OCI-LY7 (cell line): ENCODE measurements at regions of chr3 and their contacts with region 1.

Region 1: DNA sequence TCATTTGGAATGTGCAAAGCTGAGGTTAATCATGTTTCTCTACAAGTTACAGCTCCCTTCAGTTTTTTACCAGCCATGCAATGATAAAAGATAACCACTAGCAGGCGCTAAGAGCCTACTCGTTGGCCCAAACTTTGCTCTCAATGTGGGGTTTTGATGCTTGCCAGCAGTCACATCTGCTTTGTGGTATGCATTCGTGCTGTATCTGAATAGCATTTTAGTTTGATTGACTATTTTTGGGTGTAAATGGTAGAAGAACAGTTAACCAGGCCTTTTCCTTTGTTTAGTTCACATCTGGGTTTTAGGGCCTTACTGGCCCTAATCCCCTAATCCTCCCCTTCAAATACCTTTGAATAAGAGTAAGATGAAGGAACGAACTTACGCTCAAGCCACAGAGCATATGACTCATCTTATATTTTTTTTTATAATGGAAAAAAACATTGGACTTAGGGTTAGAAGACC is 4.4 kb upstream of the CLDN11 start:
- DNase-seq: peak; percentile 73
- H3K4me3 ChIP-seq: no peak overlapping the region
- H3K27ac ChIP-seq: no peak overlapping the region
- H3K4me1 ChIP-seq: no peaks in the 10 kb centered on the region
- CTCF ChIP-seq: peak; percentile 99

Region 2: GRCh38 chr3:169863458-169863899 is 550.8 kb before region 1 on chr3:
- CTCF ChIA-PET with region 1: no interaction called
- POLR2A ChIA-PET with region 1: no interaction called
- intact Hi-C with region 1: loop called (anchors 5 kb)
- DNase-seq: peak; percentile 85
- H3K4me3 ChIP-seq: no peak overlapping the region
- H3K27ac ChIP-seq: no peak overlapping the region
- H3K4me1 ChIP-seq: peaks cover 33% of the 10 kb centered on the region
- CTCF ChIP-seq: peak; percentile 99

Region 3: GRCh38 chr3:170598091-170598502 is 183.9 kb after region 1 on chr3:
- CTCF ChIA-PET with region 1: no interaction called
- POLR2A ChIA-PET with region 1: no interaction called
- intact Hi-C with region 1: no loop called
- DNase-seq: no peak
- H3K4me3 ChIP-seq: no peak overlapping the region
- H3K27ac ChIP-seq: no peak overlapping the region
- H3K4me1 ChIP-seq: no peaks in the 10 kb centered on the region
- CTCF ChIP-seq: no peak

Region 4: DNA sequence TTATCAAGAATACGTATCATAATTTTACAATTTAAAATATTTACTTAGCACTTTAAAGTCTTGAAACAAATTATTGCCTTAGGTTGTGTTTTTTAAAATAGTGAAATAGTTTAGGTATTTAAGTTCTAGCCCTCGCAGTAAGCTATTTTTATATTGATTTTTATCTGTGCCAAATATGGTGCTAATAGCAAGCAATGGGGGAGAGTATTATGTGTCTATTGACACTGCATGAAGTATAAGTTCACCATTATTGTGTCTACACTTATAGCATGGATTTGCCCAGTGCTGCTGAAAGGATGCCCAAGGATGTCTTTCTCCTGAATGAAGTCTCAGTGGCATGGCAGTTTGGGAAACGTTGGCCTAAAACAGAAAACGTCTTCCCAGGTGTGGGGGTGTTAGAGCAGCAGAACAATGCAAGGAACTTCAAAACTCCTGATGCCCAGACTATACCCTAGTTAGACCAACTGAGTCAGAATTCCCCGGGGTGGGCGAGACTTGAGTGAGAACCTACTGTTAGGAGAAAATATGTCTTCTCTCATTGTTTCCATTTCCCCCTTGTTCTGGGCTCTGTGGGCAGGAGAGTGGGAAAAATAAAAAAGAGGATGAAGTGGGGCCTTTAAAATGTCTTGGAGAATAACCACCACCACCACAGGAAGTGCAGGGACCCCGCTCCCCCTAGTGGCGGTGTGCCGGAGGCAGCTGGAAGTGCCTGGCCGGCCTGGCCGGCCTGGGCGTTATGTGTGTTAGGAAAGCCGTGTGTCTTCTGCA is 275.8 kb after region 1 on chr3:
- CTCF ChIA-PET with region 1: interaction called, 4 read pairs
- POLR2A ChIA-PET with region 1: no interaction called
- intact Hi-C with region 1: loop called (anchors 1 kb)
- DNase-seq: peak; percentile 52
- H3K4me3 ChIP-seq: no peak overlapping the region
- H3K27ac ChIP-seq: no peak overlapping the region
- H3K4me1 ChIP-seq: no peaks in the 10 kb centered on the region
- CTCF ChIP-seq: peak; percentile 82

Region 5: GRCh38 chr3:170811928-170812591 is 397.8 kb after region 1 on chr3:
- CTCF ChIA-PET with region 1: interaction called, 23 read pairs
- POLR2A ChIA-PET with region 1: interaction called, 11 read pairs
- intact Hi-C with region 1: loop called (anchors 1 kb)
- DNase-seq: peak; percentile 77
- H3K4me3 ChIP-seq: no peak overlapping the region
- H3K27ac ChIP-seq: no peak overlapping the region
- H3K4me1 ChIP-seq: no peaks in the 10 kb centered on the region
- CTCF ChIP-seq: peak; percentile 96